ENCODE measurements at regions of chr9 and their contacts with region 1.

Region 1: DNA sequence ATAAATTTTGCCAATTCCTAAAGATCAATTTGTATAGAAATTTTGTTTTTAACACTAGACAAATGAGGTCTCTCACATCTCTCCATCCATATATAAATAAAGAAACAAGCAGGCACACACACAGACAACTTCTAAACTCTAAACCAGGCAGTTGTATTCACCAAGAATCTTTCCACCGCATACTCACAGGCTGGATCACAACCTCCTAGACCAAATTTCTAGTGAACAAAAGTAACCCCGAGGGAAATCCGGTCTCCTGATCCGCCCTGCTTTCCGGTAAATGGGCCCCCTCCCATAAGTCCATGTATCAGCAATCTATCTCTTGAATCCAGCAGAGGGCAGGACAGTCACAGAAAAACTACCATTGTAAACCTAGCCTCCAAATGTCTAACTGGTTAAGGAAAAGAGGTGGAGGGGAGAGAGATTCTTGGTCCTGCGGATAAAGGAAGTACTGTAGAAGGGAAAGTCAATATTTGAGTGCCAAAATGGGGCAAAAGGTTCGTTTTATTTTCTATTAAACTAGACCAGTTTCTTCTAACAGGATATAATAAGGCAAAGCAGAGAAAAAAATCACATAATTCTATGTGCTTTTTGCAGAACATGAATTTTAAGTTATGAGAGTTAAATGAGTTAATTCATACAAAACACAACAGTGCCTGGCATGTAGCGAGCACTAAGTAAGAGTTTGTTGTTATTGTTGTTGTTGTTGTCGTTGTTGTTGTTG is 4.8 kb upstream of the SMU1 start:
- DNase-seq: peak in 1 of 2 donors; percentile 82
- ATAC-seq: peak; percentile 33 to 77 (median 68)
- H3K4me3 ChIP-seq: peak overlapping the region in 3 of 10 donors; percentile 10 to 23 (median 16)
- H3K27ac ChIP-seq: peak overlapping the region in 8 of 10 donors; percentile 3 to 72 (median 45)
- H3K4me1 ChIP-seq: peaks cover 0 to 38% (median 19%) of the 10 kb centered on the region in 9 donors
- H3K27me3 ChIP-seq: no peaks in the 10 kb centered on the region
- CTCF ChIP-seq: peak; percentile 71 to 91 (median 77)

Region 2: GRCh38 chr9:33225319-33226149 is 144.2 kb after region 1 on chr9:
- intact Hi-C with region 1: loop called (anchors 1 to 5 kb)
- DNase-seq: peak in 1 of 2 donors; percentile 68
- ATAC-seq: peak in 6 of 8 donors; percentile 34 to 68 (median 48)
- H3K4me3 ChIP-seq: no peak overlapping the region
- H3K27ac ChIP-seq: peak overlapping the region in 2 of 10 donors; percentile 0 to 77
- H3K4me1 ChIP-seq: peaks cover 0 to 30% (median 4%) of the 10 kb centered on the region in 9 donors
- H3K27me3 ChIP-seq: no peaks in the 10 kb centered on the region
- CTCF ChIP-seq: peak; percentile 47 to 85 (median 78)

Measured in heart right ventricle (tissue), 16 donors.